HEK293T (cell line): ENCODE measurements at regions of chr13 and their contacts with region 1.

Region 1: GRCh38 chr13:39616087-39616694 is 13.2 kb upstream of the LHFPL6 start:
- DNase-seq: peak; percentile 78

Region 2: DNA sequence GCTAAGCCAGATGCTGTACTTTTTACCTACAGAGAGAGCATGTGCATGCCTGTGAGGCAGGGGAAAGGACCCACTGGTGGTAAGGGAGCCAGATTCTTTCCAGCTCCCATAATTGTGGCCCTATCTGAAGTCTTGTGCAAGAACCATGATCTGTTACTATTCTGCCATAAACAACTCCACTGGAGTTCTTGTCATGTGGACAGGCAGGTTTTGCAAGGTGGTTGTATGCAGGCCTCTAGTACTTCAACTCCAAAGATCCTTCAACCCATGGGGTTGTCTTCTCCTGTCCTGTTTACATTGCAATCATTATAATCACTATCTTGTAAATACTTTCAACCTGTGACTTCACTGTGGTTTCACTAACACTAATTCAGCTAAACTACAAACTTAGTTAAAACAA is 592.4 kb before region 1 on chr13:
- CTCF ChIA-PET with region 1: no interaction called
- POLR2A ChIA-PET with region 1: no interaction called
- DNase-seq: no peak

Region 3: GRCh38 chr13:39144941-39145533 is 471.2 kb before region 1 on chr13:
- CTCF ChIA-PET with region 1: interaction called, 15 read pairs
- POLR2A ChIA-PET with region 1: no interaction called
- DNase-seq: peak; percentile 68

Region 4: DNA sequence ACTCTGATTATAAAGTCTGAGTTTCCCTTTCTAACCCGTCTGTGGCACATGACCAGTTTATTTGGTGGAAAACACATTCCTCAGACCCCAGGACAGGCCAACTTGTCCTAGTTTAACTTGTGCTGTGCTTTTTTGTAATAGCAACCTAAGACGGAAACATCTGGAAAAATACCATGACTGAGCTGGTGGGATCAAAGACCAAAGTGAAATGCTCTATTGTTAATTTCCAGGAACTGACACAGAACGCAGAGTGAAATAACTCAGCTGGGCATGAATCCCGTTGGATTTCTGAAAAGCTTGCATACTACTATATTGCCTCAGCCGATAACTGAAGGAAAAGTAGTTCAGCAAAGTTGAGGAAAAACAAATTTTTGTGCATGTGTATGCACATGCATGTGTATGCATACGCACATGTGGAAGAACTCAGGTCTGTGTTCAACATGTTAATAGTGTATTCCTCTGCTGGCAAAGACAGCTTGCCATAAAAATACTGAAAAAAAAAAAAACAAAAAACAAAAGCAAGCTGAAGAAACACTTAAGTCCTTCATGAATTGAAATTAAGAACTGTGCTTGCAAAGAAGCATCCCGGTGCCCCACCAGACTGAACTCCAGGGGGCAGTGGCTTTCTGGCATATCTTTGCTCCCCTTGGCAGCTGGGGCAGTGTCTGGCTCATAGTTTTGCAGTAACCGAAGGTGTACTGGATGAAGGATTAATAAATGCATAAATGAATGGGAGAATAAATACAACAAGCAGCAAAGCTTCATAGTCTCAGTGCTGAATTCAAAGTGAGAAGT is 201.0 kb before region 1 on chr13:
- CTCF ChIA-PET with region 1: interaction called, 24 read pairs
- POLR2A ChIA-PET with region 1: no interaction called
- DNase-seq: peak; percentile 21

Region 5: DNA sequence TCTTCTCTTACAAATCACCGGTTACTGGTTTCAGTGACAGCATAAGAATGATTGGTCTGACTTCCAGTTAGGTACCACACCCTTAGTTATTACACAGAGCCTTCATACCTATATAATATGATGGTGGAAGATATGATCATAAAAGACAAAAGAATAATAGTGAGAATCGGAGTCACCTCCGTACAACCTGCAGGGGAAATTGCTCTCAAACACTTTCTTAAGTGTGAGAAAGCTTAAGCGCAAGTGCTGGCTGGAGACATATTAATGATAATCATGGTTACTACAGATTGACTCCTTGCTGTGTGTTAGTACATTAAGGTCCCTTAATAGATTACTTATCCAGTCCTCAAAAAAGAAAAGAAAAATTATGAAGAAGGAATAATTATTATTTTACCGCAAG is 11.4 kb before region 1 on chr13:
- CTCF ChIA-PET with region 1: interaction called, 14 read pairs
- POLR2A ChIA-PET with region 1: interaction called, 3 read pairs
- DNase-seq: no peak